Calu3 (cell line): ENCODE measurements at regions of chr11 and their contacts with region 1.

Region 1: GRCh38 chr11:65150509-65151271 is 16.4 kb upstream of the SYVN1 start:
- DNase-seq: peak; percentile 96
- H3K4me3 Mint-ChIP-seq: peak overlapping the region; percentile 24
- H3K27ac Mint-ChIP-seq: peak overlapping the region; percentile 57
- H3K4me1 Mint-ChIP-seq: peaks cover 45% of the 10 kb centered on the region
- H3K27me3 Mint-ChIP-seq: no peaks in the 10 kb centered on the region
- CTCF ChIP-seq: no peak

Region 2: GRCh38 chr11:65083834-65084597 is 66.7 kb before region 1 on chr11 and contains the starts of genes CDCA5 and ZFPL1:
- CTCF ChIA-PET with region 1: no interaction called
- intact Hi-C with region 1: no loop called
- DNase-seq: peak; percentile 97
- H3K4me3 Mint-ChIP-seq: peak within 1 kb of the TSS; percentile 100
- H3K27ac Mint-ChIP-seq: peak within 1 kb of the TSS; percentile 97
- H3K4me1 Mint-ChIP-seq: peaks cover 32% of the 10 kb centered on the region
- H3K27me3 Mint-ChIP-seq: no peaks in the 10 kb centered on the region
- CTCF ChIP-seq: no peak
- total RNA-seq, gene CDCA5: 53.4 and 55.4 TPM in 2 replicates
- total RNA-seq, gene ZFPL1: 47.6 and 48.0 TPM in 2 replicates

Region 3: DNA sequence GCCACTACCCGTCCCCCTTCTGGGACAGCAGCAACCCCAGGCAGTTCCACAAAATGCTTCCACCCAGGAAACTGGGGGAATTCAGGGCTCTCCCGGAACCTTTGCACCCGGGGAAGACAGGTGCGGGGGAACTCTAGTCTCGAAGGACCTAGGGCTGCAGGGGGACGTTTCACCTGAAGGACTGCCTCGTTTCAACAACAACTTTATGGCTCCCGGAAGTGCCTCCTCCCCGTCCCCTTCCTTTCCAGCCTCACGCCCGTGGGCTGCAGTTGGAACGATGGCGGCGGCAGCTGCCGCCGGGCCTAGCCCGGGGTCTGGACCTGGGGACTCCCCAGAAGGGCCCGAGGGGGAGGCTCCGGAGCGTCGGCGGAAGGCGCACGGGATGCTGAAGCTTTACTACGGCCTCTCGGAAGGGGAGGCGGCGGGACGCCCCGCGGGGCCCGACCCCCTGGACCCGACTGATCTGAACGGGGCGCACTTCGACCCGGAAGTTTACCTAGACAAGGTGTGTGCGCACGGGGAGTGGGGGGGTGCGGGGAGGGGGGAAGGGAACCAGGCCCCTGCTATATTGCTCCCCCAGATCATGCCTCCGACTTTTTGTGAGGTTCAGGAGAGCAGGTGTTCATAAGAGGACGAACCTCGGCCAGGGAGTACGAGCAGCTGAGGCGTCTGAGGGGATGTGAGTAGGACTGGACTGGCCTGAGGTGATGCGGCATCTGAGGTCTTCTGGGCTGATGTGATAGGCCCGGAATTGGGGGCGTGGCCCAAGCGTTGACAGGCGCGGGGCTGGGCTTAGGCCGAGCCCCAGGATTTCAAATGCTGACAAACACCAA is 54.5 kb before region 1 on chr11 and contains the start of gene VPS51:
- CTCF ChIA-PET with region 1: no interaction called
- intact Hi-C with region 1: no loop called
- DNase-seq: peak; percentile 86
- H3K4me3 Mint-ChIP-seq: peak within 1 kb of the TSS; percentile 70
- H3K27ac Mint-ChIP-seq: peak within 1 kb of the TSS; percentile 56
- H3K4me1 Mint-ChIP-seq: peaks cover 5% of the 10 kb centered on the region
- H3K27me3 Mint-ChIP-seq: no peaks in the 10 kb centered on the region
- CTCF ChIP-seq: no peak
- total RNA-seq, gene VPS51: 64.4 and 78.1 TPM in 2 replicates

Region 4: DNA sequence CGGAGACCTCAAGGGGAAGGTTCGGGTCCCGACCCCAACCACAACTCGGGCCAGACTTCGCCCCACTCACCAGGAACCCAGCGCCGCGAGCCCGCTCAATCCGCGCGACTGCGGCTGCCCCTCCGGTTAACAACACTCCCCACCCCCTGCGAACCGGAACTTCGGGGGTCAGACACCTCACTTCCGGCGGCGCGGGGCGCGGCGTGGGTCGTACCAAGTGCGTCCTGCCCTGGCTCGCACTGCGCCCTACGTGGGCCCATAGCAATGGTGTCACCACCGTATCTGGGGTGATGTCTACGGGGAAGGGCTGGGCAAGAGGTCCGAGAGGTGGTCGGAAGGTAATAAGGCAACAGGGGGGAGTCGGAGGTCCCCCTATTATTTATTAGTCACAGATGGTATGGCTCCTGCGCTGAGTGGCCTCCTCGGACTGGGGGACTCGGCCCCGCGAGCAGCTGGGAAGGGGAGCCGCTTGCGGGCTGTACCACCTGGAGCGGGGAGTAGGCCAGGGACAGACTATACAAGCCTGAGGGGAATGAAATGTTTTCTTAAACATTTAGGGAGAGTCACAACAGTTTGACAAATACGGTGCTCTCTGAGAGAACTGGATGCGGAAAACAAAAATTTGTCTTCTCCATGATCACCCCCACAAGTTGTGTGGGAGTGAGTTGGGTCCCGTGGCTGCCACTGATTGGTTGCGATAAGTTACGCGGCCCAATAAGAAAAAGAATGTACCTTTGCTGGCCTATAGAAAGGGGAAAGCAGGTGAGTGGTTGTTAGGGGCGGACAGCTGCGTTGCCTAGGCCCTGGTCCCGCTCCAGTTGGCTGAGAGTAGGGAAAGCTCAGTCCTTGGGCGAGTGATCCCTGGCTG is 16.1 kb before region 1 on chr11 and contains the start of gene SYVN1:
- CTCF ChIA-PET with region 1: interaction called, 6 read pairs
- intact Hi-C with region 1: loop called (anchors 2 kb)
- DNase-seq: peak; percentile 92
- H3K4me3 Mint-ChIP-seq: peak within 1 kb of the TSS; percentile 99
- H3K27ac Mint-ChIP-seq: peak within 1 kb of the TSS; percentile 100
- H3K4me1 Mint-ChIP-seq: peaks cover 28% of the 10 kb centered on the region
- H3K27me3 Mint-ChIP-seq: no peaks in the 10 kb centered on the region
- CTCF ChIP-seq: no peak
- total RNA-seq, gene SYVN1: 68.5 and 76.7 TPM in 2 replicates